Dendritic cell treated with granulocyte-macrophage colony-stimulating factor and Interleukin-4, amounts not matched to agents 40 ng/mL and 50 ng/mL, for 4 days (primary cell): ENCODE measurements at regions of chr22 and their contacts with region 1.

Region 1: GRCh38 chr22:39384750-39385480 is 14.7 kb upstream of the TAB1 start:
- H3K4me3 Mint-ChIP-seq: no peak overlapping the region
- H3K27ac Mint-ChIP-seq: no peak overlapping the region
- H3K4me1 Mint-ChIP-seq: peaks cover 13% of the 10 kb centered on the region
- H3K27me3 Mint-ChIP-seq: peaks cover 32% of the 10 kb centered on the region

Region 2: DNA sequence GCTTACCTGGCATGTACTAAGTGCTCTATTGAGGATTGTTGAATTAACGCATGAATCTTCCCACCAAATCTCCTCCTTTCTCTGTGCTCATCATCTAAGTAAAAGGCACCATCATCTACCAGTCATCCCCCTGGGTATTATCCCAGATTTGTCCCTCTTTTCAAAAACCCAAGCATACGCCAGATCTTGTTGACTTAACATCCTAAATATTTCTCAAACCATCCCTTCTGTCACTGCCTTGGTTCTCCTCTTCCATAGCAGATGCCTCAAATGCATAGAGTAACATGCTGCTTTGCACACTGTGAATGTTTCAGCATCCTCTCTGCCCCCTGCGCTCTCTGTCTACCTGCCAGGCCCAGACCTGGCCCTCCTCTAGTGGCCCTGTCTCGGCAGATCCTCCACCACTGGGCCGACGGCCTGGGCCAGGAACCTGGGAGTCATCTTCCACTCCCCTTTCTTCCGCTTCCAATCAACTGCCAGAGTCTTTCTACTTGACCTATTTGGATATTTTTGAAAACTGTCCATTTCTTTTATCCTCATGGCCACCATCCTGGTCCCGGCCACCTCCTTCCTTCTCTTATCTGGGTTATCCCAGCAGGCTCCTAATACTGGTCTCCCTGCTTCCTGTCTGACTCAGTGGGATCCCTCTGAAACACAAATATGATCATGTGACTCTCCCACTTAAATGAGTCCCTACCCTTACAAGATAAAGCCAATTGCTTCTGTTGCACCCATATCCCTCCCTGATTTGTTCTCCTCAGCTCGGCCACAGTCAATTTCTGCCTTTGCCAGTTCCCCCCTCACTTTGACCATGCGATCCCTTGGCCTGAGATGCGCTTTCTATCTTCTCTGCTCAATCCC is 11.3 kb after region 1 on chr22:
- intact Hi-C with region 1: loop called (anchors 1 kb)
- H3K4me3 Mint-ChIP-seq: no peak overlapping the region
- H3K27ac Mint-ChIP-seq: peak overlapping the region; percentile 0
- H3K4me1 Mint-ChIP-seq: peaks cover 2% of the 10 kb centered on the region
- H3K27me3 Mint-ChIP-seq: no peaks in the 10 kb centered on the region